Common myeloid progenitor, CD34-positive (primary cell): ENCODE measurements at regions of chr14 and their contacts with region 1.

Region 1: GRCh38 chr14:77040059-77040740 is 11.7 kb upstream of the IRF2BPL start:
- DNase-seq: peak; percentile 99 to 100 (median 100)
- H3K4me3 ChIP-seq: peak overlapping the region in 6 of 7 experiments; percentile 26 to 70 (median 55)
- H3K27ac ChIP-seq: peak overlapping the region; percentile 91 to 95
- H3K4me1 ChIP-seq: peaks cover 43 to 97% (median 78%) of the 10 kb centered on the region in 4 experiments
- H3K27me3 ChIP-seq: no peaks in the 10 kb centered on the region

Region 2: GRCh38 chr14:77028384-77029231 is 11.6 kb before region 1 on chr14 and contains the start of gene IRF2BPL:
- CTCF ChIA-PET with region 1: interaction called, 30 read pairs
- POLR2A ChIA-PET with region 1: interaction called, 6 read pairs
- DNase-seq: peak; percentile 91 to 96 (median 96)
- H3K4me3 ChIP-seq: peak within 1 kb of the TSS; percentile 67 to 82 (median 76)
- H3K27ac ChIP-seq: peak within 1 kb of the TSS; percentile 66 to 85
- H3K4me1 ChIP-seq: peaks cover 2 to 74% (median 56%) of the 10 kb centered on the region in 4 experiments
- H3K27me3 ChIP-seq: no peaks in the 10 kb centered on the region